Ascending aorta (tissue), 2 donors: ENCODE measurements at regions of chr17 and their contacts with region 1.

Region 1: GRCh38 chr17:78840725-78841611 is at the start of gene USP36:
- DNase-seq: peak; percentile 94 to 100
- H3K4me3 ChIP-seq: peak within 1 kb of the TSS; percentile 87 to 92
- H3K27ac ChIP-seq: peak within 1 kb of the TSS; percentile 99
- H3K4me1 ChIP-seq: peaks cover 0 to 11% of the 10 kb centered on the region in 2 donors
- H3K27me3 ChIP-seq: no peaks in the 10 kb centered on the region
- CTCF ChIP-seq: peak in 1 of 3 experiments; percentile 15
- total RNA-seq, gene USP36: 111 TPM

Region 2: DNA sequence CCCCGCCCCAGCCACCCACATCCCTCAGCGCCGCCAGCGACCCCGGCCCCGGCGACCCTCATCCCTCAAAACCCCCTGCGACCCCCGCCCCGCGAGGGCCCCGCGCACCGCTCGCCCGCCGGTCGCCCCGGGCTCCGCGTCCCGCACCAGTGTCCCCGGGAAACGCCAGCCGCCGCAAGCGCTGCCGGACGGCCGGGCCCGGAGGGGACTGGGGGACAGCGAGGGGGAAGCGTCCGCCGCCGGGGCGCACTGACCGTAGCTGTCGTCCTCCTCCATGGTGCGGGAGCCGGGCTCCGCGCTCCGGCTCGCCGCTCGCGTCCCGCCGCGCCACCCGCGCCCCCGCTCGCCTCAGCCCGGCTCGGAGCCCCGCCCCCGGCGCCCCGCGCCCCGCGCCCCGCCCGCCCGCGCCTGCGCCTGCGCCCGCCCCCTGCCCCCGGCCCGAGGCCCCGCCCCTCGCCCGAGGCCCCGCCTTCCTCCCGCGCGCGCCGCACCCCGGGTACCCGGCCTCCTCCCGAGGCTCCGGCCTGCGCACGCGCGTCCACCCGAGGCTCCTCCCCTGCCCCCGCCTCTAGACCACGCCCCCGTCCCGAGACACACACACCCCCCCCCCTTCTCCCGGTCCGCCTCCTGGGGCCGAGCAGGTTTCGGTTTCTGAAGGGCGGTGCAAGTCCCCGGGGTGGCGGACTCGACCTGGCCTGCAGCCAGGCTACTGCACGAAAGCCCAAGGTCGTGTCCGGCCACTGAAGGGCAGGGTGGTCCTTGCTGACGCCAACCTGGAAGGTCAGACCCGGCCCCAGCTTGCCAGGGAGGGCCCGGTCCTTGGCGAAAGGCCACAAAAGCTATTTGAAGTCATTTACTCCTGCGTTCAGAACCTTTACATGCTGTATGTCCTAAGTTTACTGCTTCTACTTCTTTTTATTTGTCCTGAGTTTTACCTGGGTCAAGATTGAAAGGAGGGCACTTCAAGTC is 58.7 kb before region 1 on chr17 and contains the start of gene CYTH1:
- intact Hi-C with region 1: loop called (anchors 1 kb)
- DNase-seq: peak; percentile 89 to 97
- H3K4me3 ChIP-seq: peak within 1 kb of the TSS; percentile 90 to 92
- H3K27ac ChIP-seq: peak within 1 kb of the TSS; percentile 87 to 91
- H3K4me1 ChIP-seq: peaks cover 0 to 5% of the 10 kb centered on the region in 2 donors
- H3K27me3 ChIP-seq: no peaks in the 10 kb centered on the region
- CTCF ChIP-seq: no peak
- total RNA-seq, gene CYTH1: 46.5 TPM

Region 3: GRCh38 chr17:78865682-78866390 is 24.9 kb after region 1 on chr17:
- intact Hi-C with region 1: loop called (anchors 1 kb)
- DNase-seq: peak in 1 of 2 donors; percentile 90
- H3K4me3 ChIP-seq: no peak overlapping the region
- H3K27ac ChIP-seq: peak overlapping the region; percentile 31 to 50
- H3K4me1 ChIP-seq: peaks cover 5 to 39% of the 10 kb centered on the region in 2 donors
- H3K27me3 ChIP-seq: no peaks in the 10 kb centered on the region
- CTCF ChIP-seq: peak; percentile 89 to 96 (median 94)

Region 4: GRCh38 chr17:78883164-78884122 is 42.5 kb after region 1 on chr17:
- intact Hi-C with region 1: loop called (anchors 1 kb)
- DNase-seq: peak; percentile 77 to 94
- H3K4me3 ChIP-seq: peak overlapping the region; percentile 33 to 59
- H3K27ac ChIP-seq: peak overlapping the region; percentile 90 to 97
- H3K4me1 ChIP-seq: peaks cover 24 to 58% of the 10 kb centered on the region in 2 donors
- H3K27me3 ChIP-seq: no peaks in the 10 kb centered on the region
- CTCF ChIP-seq: peak in 1 of 3 experiments; percentile 9

Region 5: DNA sequence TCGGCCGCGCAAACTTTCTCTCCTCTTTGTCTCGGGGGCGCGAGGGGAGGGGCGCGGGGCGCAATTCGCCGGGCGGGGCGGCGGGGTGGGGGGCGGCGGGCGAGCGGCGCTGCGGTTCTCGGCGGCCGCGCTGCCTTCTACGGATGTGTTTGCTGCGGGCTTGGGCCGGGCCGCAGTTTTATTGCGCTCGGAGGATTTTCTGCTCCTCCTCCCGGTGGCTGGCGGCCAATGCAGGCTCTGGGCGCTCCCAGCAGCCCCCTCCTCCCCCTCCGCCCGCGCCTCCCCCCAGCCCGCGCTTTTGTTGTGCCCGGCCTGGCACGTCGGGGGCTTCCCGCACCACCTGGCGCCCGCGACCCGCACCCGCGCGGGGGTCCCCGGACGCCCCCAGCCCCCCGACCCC is 84.3 kb after region 1 on chr17 and contains the start of gene TIMP2:
- intact Hi-C with region 1: loop called (anchors 2 kb)
- DNase-seq: peak; percentile 43 to 90
- H3K4me3 ChIP-seq: peak within 1 kb of the TSS; percentile 94 to 98
- H3K27ac ChIP-seq: peak within 1 kb of the TSS; percentile 92 to 96
- H3K4me1 ChIP-seq: peaks cover 25 to 55% of the 10 kb centered on the region in 2 donors
- H3K27me3 ChIP-seq: no peaks in the 10 kb centered on the region
- CTCF ChIP-seq: peak in 1 of 3 experiments; percentile 8
- total RNA-seq, gene TIMP2: 278 TPM

Region 6: DNA sequence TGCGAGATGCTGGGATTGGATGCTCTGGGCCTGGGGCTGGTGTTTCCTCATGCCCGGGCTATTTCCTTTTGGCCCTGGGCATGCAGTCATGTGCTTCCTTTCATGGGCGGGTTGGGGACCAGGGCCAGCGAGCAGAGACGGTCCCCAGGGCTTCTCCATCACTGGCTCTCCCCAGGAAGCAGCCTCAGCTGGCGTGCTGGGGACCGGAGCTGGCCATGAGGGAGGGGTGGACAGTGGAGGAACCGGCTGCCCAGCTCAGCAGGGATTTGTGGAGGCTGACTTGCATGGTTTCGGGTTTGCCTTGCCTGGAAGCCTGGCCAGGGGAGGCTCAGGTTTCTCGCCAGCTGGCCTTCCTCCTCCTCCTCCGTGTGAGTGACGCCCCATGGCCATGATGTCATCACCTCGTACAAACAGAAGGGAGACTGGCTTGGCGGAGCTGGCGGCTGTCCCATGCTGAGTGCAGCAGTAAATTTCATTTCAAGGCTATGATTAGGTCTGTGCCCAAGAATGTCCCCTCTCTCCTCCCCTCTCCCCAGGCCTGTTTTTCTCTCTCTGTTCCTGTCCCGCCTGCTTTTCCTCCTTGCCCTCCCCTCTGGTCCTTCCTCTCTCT is 93.1 kb after region 1 on chr17:
- intact Hi-C with region 1: loop called (anchors 1 kb)
- DNase-seq: peak; percentile 95 to 99
- H3K4me3 ChIP-seq: peak overlapping the region; percentile 17 to 38
- H3K27ac ChIP-seq: peak overlapping the region; percentile 88 to 98
- H3K4me1 ChIP-seq: peaks cover 15 to 40% of the 10 kb centered on the region in 2 donors
- H3K27me3 ChIP-seq: no peaks in the 10 kb centered on the region
- CTCF ChIP-seq: no peak

Region 7: DNA sequence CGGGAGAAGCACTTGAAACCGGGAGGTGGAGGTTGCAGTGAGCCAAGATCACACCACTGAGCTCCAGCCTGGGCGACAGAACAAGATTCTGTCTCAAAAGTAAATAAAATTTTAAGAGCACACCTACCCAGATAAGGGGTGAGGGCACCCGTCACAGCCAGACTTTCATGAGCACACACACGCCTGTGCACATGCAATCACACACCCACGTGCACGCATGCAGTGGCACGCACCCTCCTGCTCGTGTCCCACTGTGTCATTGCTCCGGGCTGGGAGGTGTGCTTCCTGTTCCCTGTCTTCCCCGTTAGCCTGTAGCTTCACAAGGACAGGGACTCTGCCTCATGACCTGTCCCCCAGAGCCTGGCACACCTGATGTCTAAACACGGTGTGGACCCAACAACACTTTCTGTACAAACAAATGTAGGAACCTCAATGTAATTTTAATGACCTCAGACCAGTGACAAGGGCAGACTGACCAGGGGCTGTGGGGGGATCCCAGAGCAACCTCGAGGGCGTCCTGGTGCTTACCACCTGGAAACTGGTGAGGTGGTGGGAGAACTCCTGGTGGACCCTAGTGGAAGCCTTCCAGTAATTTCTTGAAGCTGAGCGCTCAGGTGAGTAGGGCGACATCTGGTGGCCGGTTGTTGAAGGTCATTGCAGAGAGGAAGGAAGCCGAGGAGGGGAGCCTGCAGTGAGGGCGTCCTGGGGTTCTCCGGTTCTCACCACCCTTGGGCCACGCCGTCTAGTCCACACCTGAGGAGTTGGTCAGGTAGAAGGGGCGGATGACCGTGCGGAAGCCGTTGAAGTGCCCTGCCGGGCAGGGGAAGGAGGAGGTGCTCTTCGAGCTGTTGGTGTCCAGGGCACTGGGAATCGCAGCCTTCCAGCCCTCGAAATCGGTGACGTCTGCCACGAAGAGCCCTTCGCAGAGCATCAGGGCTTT is 130.1 kb after region 1 on chr17:
- intact Hi-C with region 1: loop called (anchors 2 kb)
- DNase-seq: peak; percentile 28 to 90
- H3K4me3 ChIP-seq: peak overlapping the region in 1 of 2 donors; percentile 10
- H3K27ac ChIP-seq: peak overlapping the region in 1 of 2 donors; percentile 58
- H3K4me1 ChIP-seq: peaks cover 7 to 8% of the 10 kb centered on the region in 2 donors
- H3K27me3 ChIP-seq: no peaks in the 10 kb centered on the region
- CTCF ChIP-seq: peak; percentile 86 to 93 (median 92)

Region 8: DNA sequence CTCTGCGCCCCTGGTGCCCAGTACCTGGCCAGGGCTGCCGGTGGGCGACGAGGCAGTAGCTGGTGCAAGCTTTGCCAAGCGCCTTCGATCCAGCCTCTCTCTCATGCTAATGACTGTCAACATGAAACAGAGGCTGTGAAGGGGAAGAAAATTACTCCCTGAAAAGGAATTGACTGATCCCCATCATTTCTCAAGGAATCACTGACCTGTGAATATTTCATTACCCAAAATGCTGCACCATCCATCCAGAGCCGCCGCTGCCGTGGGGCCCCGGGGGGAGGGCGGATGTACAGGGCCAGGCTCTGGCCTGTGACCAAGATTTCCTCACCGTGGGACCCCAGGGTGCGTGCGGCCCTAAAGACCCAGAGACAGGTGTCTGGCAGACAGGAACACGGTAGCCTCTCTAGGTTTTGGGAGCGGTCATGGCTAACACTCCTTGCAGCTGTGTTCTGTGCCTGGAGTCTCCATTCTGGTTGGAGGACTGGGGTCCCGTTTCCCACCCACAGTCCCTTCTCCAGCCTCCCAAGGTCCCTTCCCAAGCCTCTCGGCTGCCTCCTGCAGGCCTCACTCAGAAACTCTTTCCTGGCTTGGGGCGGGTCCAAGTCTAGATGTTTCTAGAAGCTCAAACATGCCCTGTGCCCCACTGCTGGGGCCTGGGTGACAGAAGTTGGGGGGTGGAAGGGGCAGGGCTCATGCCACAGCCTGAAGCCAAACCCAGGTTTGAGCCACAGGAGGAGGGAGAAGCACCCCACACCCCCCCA is 307.0 kb after region 1 on chr17:
- intact Hi-C with region 1: no loop called
- DNase-seq: no peak
- H3K4me3 ChIP-seq: no peak overlapping the region
- H3K27ac ChIP-seq: no peak overlapping the region
- H3K4me1 ChIP-seq: no peaks in the 10 kb centered on the region
- H3K27me3 ChIP-seq: no peaks in the 10 kb centered on the region
- CTCF ChIP-seq: no peak